Prostate gland (tissue), 2 donors: ENCODE measurements at regions of chr2 and their contacts with region 1.

Region 1: DNA sequence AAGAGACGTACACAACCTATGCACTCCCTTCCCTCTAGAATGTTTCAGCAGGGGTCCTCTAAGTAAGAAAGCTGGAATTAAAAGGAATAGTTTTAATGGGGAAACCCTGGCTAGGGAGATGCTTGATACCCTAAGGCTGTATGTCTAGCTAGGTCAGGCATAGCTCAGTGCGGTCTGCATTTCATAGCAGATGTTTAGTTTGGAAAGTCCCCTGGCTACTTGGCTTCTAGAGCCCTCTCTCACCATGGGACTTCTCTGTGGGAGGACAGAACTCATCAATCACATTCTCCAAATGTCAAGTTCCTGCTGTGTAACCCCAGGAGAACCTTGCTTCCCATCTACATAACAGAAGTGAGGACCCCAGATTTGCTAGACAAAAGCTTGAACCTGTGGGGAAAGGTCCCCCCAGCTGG is 24.1 kb upstream of the ANXA4 start:
- DNase-seq: no peak
- H3K4me3 ChIP-seq: no peak overlapping the region
- H3K27ac ChIP-seq: no peak overlapping the region
- H3K4me1 ChIP-seq: no peaks in the 10 kb centered on the region
- H3K27me3 ChIP-seq: no peaks in the 10 kb centered on the region
- CTCF ChIP-seq: no peak
- POLR2A ChIP-seq: no peak

Region 2: DNA sequence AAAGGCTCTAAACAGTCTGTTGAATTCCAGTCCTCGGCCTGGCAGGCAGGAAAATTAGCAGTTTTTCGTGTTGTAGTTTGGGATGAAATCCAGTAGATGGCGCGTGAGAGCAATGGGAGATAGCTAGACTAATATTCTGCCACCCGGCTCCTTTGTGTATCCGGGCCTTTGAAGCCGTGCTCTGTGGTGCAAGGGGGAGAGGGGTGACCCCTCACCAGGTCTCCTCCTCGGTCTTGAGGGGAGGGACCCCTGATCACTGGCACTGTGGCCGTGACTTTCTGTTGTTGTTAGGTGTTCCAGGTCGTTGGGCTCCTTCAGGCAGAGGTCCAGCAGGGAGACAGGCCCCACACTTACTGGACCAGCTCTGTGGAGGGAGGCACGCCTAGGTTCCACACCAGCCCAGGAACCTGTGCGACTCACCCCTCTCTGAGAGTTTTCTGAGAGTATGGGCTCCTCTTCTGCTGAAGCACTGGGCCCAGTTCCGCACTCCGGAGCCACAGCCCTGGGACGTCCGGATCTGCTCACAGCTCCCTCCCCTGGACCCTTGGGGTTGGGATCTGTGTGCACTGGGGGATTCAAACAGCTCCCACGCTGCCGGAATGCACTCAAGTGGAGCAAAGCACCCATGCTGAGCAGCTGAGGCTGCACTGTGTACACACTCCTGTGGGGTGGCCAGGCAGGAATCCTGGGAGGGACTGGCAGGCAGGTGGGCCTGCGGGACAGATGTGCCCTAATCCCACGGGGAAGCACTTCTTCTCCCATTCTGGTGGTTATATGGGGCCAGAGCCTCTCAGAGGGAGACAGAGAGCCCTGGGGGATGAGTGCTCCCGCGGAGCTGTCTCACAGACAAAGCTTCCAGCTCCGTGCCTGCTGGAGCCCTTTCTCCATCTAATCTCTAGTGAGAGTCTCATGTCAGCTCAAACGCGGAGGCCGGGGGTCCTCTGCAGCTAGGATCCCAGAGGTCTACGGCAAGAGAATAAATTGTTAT is 774.0 kb before region 1 on chr2:
- intact Hi-C with region 1: loop called (anchors 10 kb)
- DNase-seq: peak; percentile 63
- H3K4me3 ChIP-seq: no peak overlapping the region
- H3K27ac ChIP-seq: no peak overlapping the region
- H3K4me1 ChIP-seq: no peaks in the 10 kb centered on the region
- H3K27me3 ChIP-seq: no peaks in the 10 kb centered on the region
- CTCF ChIP-seq: peak; percentile 47 to 84 (median 68)
- POLR2A ChIP-seq: no peak

Region 3: GRCh38 chr2:69565431-69565839 is 152.4 kb before region 1 on chr2:
- intact Hi-C with region 1: loop called (anchors 5 kb)
- DNase-seq: no peak
- H3K4me3 ChIP-seq: no peak overlapping the region
- H3K27ac ChIP-seq: no peak overlapping the region
- H3K4me1 ChIP-seq: no peaks in the 10 kb centered on the region
- H3K27me3 ChIP-seq: no peaks in the 10 kb centered on the region
- CTCF ChIP-seq: peak; percentile 17 to 47 (median 34)
- POLR2A ChIP-seq: no peak